A673 (cell line): ENCODE measurements at regions of chr16 and their contacts with region 1.

Region 1: GRCh38 chr16:25713785-25714580 is 22.2 kb downstream of the HS3ST4 start:
- DNase-seq: peak; percentile 85
- H3K4me3 ChIP-seq: peak overlapping the region; percentile 16
- H3K27ac ChIP-seq: peak overlapping the region; percentile 77
- H3K4me1 ChIP-seq: peaks cover 48% of the 10 kb centered on the region
- H3K27me3 ChIP-seq: no peaks in the 10 kb centered on the region
- CTCF ChIP-seq: no peak

Region 2: GRCh38 chr16:25817876-25818275 is 103.9 kb after region 1 on chr16:
- CTCF ChIA-PET with region 1: no interaction called
- POLR2A ChIA-PET with region 1: no interaction called
- intact Hi-C with region 1: loop called (anchors 5 kb)
- DNase-seq: no peak
- H3K4me3 ChIP-seq: no peak overlapping the region
- H3K27ac ChIP-seq: peak overlapping the region; percentile 73
- H3K4me1 ChIP-seq: peaks cover 15% of the 10 kb centered on the region
- H3K27me3 ChIP-seq: no peaks in the 10 kb centered on the region
- CTCF ChIP-seq: no peak